ENCODE measurements at regions of chr1 and their contacts with region 1.

Region 1: DNA sequence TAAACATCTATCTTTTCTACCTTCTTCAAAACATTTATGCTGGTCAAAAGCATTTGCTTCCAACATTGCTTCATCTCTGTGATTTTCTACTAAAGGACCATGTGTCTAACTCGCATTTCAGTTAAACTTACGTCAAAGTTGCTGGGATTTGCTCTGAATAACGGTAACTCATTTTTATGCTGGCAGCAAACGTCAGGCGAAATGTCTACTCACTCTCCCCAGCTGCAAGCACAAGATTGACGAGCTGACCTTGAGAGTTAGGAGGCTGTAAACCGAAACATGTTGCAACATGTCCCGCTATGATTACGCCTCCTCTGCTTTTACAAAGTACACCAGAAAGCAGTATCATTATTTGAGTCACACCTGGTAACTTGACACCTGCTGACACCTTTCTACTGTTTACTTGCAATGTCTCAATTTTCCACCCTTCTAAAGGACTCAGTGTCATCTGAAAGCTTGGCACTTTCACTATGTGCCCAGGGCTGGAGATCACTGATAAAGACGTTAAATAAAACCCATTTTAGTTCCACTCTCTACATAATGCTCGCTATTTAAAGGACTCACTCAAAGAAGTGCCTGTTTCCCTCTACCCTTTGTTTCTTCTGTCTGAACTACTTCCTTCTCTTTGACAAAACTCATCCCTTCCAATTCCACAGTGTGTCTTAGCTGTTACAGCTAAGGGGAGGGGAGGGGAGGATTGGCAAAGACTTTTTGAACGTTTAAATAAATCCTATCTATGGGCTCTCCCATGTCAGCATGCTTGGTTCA is 111.9 kb downstream of the PTPN14 start:
- DNase-seq: peak; percentile 86
- H3K4me3 Mint-ChIP-seq: peak overlapping the region; percentile 74
- H3K27ac Mint-ChIP-seq: peak overlapping the region; percentile 98
- H3K4me1 Mint-ChIP-seq: peaks cover 55% of the 10 kb centered on the region
- H3K27me3 Mint-ChIP-seq: no peaks in the 10 kb centered on the region

Region 2: GRCh38 chr1:214270187-214270586 is 169.3 kb before region 1 on chr1:
- intact Hi-C with region 1: no loop called
- DNase-seq: no peak
- H3K4me3 Mint-ChIP-seq: no peak overlapping the region
- H3K27ac Mint-ChIP-seq: no peak overlapping the region
- H3K4me1 Mint-ChIP-seq: no peaks in the 10 kb centered on the region
- H3K27me3 Mint-ChIP-seq: peaks cover 43% of the 10 kb centered on the region

Region 3: DNA sequence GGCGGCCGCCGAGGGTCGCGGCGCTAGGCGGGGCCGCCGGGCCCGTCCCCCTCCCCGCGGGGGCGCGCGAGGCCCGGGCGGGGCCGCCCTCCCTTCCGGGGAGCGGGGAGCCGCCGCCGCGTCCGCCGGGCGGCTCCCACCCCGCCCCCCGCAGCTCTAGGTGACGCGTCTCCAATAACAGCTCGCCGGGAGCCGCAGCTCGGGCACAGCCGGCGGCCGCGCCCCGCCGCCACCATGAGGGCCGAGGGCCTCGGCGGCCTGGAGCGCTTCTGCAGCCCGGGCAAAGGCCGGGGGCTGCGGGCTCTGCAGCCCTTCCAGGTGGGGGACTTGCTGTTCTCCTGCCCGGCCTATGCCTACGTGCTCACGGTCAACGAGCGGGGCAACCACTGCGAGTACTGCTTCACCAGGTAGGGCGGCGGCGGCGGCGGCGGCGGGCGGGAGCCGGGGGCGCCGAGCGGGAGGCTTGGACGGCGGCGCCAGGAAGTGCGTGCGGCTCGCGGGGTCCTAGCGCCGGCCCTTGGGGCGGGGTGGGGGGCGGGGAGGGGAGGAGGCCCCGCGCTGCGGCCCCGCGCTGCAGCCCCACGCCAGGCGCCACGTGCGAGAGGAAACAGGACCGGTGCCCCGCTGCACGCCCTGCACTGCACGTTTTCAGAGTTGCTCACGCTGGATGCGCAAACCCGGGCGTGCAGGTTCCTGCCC is 158.4 kb before region 1 on chr1 and contains the start of gene SMYD2:
- intact Hi-C with region 1: loop called (anchors 5 kb)
- DNase-seq: peak; percentile 90
- H3K4me3 Mint-ChIP-seq: peak within 1 kb of the TSS; percentile 93
- H3K27ac Mint-ChIP-seq: peak within 1 kb of the TSS; percentile 90
- H3K4me1 Mint-ChIP-seq: peaks cover 37% of the 10 kb centered on the region
- H3K27me3 Mint-ChIP-seq: no peaks in the 10 kb centered on the region
- total RNA-seq, gene SMYD2: 33.3 and 34.1 TPM in 2 replicates

Region 4: DNA sequence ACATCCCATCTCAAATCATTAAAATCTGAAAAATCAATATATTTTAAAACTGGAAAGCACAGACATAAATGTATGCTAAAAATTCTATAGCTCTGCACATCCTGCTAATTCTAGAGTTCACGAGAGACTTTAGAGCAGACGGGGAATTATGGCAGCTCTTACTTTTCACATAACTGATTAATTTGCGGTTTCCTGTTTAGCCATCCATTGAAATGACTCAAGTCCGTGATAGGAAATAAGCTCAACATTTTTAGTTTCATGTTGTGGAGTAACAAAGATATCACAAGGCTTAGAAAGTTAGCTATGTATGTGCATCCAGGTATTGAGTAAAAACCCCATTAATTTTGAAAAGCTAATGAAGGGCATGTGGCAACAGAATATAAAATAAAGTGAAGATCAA is 35.4 kb before region 1 on chr1:
- intact Hi-C with region 1: loop called (anchors 1 kb)
- DNase-seq: no peak
- H3K4me3 Mint-ChIP-seq: no peak overlapping the region
- H3K27ac Mint-ChIP-seq: peak overlapping the region; percentile 81
- H3K4me1 Mint-ChIP-seq: peaks cover 38% of the 10 kb centered on the region
- H3K27me3 Mint-ChIP-seq: no peaks in the 10 kb centered on the region

Region 5: DNA sequence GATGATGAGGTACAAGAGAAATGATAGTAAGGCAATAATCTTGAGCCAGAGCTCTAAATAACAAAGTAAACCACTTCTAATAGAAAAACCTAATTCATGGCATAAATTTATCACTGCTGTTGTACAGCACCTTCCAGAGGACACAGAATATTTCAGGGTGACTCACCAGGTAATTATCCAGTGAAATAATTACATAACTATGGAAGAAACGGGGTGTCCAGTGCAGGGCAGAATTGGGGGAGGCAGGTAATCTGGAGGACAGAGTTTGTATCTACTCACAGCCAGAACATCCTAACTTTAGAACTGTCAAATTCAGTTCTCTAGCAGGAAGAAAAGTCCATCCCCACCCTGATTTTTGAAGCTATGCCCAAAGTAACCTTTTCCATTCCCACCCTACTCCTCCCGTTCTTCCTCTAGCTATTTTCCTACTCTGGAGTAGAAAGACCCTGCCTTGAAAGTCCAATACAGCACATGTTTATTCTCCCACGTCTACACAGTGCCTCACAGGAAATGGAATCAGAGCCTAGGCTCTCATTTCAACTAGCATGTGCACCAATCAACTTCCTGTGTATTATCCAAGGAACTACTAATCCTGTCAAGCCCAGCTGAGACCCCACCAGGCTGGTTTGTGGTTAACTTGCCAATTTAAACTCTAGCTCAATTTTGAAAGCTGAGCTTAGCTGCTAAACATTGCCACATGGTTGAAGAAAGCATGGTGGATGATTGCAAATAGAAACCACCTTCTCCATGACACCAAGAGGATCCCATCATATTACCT is 15.3 kb after region 1 on chr1:
- intact Hi-C with region 1: loop called (anchors 1 kb)
- DNase-seq: no peak
- H3K4me3 Mint-ChIP-seq: no peak overlapping the region
- H3K27ac Mint-ChIP-seq: peak overlapping the region; percentile 45
- H3K4me1 Mint-ChIP-seq: peaks cover 54% of the 10 kb centered on the region
- H3K27me3 Mint-ChIP-seq: no peaks in the 10 kb centered on the region

Region 6: DNA sequence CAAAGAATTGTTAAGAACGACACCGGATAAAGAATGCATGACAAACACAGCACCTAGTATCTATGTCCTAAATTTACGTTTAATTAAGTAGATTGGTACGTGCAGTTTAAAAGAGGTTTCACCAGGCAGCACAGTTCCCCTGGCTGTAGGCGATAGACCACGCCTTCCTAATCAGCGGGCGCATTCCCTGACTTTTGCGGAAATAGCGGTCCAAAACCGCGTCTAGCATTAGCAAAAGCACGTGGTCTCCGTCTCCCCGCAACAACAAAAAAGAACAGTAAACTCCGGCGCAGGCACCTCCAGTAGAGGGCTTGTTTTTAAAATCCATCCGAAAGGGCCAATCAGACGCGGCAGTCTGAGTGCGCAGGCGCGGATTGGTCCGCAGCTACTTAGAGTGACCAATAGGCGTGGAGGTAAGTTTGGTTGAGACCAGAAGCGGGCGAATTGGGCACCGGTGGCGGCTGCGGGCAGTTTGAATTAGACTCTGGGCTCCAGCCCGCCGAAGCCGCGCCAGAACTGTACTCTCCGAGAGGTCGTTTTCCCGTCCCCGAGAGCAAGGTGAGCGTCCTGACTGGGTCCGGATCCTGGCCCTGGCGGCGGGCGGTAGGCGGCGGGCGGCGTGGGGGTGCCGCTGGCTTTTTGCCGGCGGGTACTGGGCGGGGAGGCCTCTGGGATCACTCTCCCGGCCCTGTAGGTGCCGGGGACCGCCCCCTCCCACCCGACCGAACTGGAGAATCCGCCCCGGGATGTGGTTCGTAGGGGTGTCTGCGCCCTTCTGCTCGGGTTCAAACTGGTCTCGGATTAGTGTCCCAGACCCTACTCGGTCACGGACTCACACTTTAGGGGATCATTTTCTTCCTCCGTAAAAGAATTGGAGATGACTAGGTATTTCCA is 163.5 kb after region 1 on chr1 and contains the start of gene CENPF:
- intact Hi-C with region 1: loop called (anchors 2 kb)
- DNase-seq: peak; percentile 98
- H3K4me3 Mint-ChIP-seq: peak within 1 kb of the TSS; percentile 90
- H3K27ac Mint-ChIP-seq: peak within 1 kb of the TSS; percentile 97
- H3K4me1 Mint-ChIP-seq: peaks cover 29% of the 10 kb centered on the region
- H3K27me3 Mint-ChIP-seq: no peaks in the 10 kb centered on the region
- total RNA-seq, gene CENPF: 54.4 and 63.0 TPM in 2 replicates

Measured in activated CD4-positive, alpha-beta T cell treated with anti-CD3 and anti-CD28 coated beads, Interleukin-2, amount 10 ng/mL, durations not matched to agents 24 days and 14 days (primary cell).